ENCODE measurements at regions of chr13 and their contacts with region 1.

Region 1: GRCh38 chr13:48580185-48580803 is 47.4 kb upstream of the RCBTB2 start:
- DNase-seq: peak; percentile 50 to 94 (median 78)
- H3K4me3 ChIP-seq: no peak overlapping the region
- H3K27ac ChIP-seq: no peak overlapping the region
- H3K4me1 ChIP-seq: peaks cover 0 to under 1% of the 10 kb centered on the region in 2 donors
- H3K27me3 ChIP-seq: no peaks in the 10 kb centered on the region
- CTCF ChIP-seq: peak; percentile 55 to 89 (median 76)
- POLR2A ChIP-seq: no peak

Region 2: DNA sequence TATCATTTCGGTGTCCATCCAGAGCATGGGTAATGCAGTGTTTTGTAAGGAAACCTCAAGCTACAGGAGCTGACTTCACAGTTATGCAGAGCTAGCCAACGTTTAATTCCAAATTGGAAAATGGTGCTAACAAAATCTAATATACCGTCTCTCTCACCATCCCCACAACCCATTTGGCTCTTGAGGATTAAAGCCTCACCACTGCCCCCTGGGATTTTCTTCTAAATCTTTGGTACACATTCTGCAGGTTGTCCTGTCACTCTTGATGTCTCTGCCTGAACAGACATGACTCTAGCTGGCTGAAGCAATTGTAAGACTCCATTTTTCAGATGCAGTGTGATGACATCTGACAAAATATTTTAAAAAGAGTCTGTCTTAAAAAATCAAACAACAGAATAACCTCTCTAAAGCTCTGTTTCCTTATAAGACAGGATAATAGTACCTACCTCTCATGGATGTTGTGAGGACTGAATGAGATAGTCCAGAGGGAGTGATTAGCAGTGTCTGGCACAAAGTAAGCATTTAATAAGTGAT is 1031.0 kb before region 1 on chr13:
- intact Hi-C with region 1: no loop called
- DNase-seq: no peak
- H3K4me3 ChIP-seq: no peak overlapping the region
- H3K27ac ChIP-seq: no peak overlapping the region
- H3K4me1 ChIP-seq: no peaks in the 10 kb centered on the region
- H3K27me3 ChIP-seq: no peaks in the 10 kb centered on the region
- CTCF ChIP-seq: no peak
- POLR2A ChIP-seq: no peak

Region 3: GRCh38 chr13:48126944-48127830 is 453.1 kb before region 1 on chr13:
- intact Hi-C with region 1: loop called in 1 of 2 experiments (anchors 10 kb)
- DNase-seq: peak; percentile 24 to 67 (median 34)
- H3K4me3 ChIP-seq: no peak overlapping the region
- H3K27ac ChIP-seq: peak overlapping the region in 3 of 5 donors; percentile 32 to 88 (median 58)
- H3K4me1 ChIP-seq: peaks cover 4 to 16% of the 10 kb centered on the region in 2 donors
- H3K27me3 ChIP-seq: no peaks in the 10 kb centered on the region
- CTCF ChIP-seq: peak; percentile 69 to 82 (median 76)
- POLR2A ChIP-seq: no peak

Region 4: DNA sequence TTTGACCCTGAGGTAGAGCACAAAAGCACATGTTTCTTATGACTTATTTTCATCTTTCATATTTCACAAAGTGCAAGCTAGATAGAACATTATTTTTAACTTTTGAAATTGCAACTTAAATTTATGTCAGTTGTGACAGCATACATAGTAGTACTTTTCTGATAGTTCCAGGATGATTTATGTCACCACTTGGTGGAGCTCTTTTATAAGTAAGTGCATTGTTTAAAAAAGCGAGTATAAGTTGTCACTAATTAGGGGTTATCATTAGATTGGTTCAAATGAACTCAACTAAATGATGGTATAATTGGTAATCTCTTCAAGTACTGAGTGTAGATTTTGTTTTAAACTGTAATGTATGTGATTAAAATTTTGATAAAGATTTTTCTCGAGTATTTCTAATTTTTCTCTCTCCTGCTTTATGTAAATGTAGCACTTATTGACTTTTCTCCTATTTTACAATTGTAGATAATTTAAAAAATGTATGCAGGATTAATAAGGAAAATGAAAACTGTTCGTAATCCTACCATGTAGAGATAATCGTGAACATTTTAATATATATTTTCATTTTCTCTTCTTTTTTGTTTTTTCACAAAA is 245.7 kb before region 1 on chr13:
- intact Hi-C with region 1: loop called (anchors 5 to 10 kb)
- DNase-seq: no peak
- H3K4me3 ChIP-seq: no peak overlapping the region
- H3K27ac ChIP-seq: no peak overlapping the region
- H3K4me1 ChIP-seq: peaks cover 0 to 6% of the 10 kb centered on the region in 2 donors
- H3K27me3 ChIP-seq: no peaks in the 10 kb centered on the region
- CTCF ChIP-seq: peak; percentile 28 to 72 (median 55)
- POLR2A ChIP-seq: no peak

Region 5: GRCh38 chr13:48526286-48526685 is 54.0 kb before region 1 on chr13:
- intact Hi-C with region 1: loop called in 1 of 2 experiments (anchors 10 kb)
- DNase-seq: no peak
- H3K4me3 ChIP-seq: no peak overlapping the region
- H3K27ac ChIP-seq: no peak overlapping the region
- H3K4me1 ChIP-seq: peaks cover 0 to 40% of the 10 kb centered on the region in 2 donors
- H3K27me3 ChIP-seq: no peaks in the 10 kb centered on the region
- CTCF ChIP-seq: no peak
- POLR2A ChIP-seq: no peak

Measured in adrenal gland (tissue), 19 donors.